AG04449 (cell line): ENCODE measurements at regions of chr17 and their contacts with region 1.

Region 1: DNA sequence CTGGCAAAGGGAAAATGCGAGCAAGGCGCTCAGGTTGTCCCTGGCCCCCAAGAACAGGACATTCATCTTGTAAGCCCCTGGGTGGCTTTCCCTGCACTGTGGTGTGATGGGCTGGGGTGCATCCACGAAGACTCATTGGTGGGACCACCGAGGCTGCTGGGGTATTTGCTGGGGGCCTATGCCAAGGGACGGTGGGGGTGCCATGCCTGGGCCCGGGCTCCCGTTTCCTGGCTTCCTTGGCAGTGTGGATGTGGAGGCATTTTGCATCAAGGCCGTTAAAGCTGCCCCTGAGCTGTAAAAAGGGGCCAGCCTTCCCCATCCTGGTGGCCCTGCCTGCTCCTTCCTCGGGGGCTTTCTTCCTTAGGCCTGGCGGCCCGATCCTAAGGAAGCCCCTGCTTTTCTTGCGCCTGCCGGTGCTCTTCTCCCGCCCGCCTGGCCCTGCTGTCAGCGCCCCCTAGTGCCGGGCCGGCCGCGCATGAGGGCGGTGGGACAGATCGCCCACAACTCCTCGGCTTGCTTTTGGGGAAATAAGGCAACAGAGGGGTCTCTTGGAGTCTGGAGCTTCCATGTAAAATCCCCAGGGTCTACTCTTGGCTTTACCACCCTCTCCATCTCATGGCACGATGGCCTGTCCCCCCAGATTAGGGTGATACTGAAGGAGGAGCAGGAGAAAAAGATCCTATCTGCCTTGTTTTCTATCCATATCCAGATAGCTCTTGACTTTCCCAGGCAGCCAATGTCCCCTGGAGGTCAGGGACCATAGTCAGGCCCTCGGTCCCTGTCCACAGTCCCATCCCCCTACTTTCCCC is 9.8 kb upstream of the TBX2 start:
- DNase-seq: no peak
- H3K4me3 ChIP-seq: no peak overlapping the region
- CTCF ChIP-seq: peak; percentile 97

Region 2: DNA sequence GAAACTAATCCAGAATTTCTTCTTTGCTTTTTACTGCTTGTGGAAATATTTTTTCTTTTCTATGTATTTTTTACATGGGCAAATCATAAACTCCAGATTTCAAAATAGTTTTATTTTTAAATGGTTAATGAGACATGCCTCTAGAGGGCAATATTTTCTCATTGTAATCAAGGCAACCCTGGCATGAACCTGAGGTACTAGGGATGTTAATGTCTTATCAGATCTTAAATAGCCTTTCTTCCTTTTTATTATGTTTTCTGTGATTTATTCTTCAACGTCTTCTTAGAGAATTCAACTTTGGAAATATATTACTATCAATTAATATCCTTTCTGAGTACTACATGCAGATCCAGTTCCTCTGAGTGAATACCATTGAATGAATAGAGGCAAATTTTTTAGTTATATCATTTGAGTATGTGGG is 387.5 kb before region 1 on chr17:
- CTCF ChIA-PET with region 1: interaction called, 54 read pairs
- POLR2A ChIA-PET with region 1: no interaction called
- DNase-seq: no peak
- H3K4me3 ChIP-seq: no peak overlapping the region
- CTCF ChIP-seq: peak; percentile 7

Region 3: GRCh38 chr17:61362396-61362795 is 27.5 kb before region 1 on chr17:
- CTCF ChIA-PET with region 1: interaction called, 12 read pairs
- POLR2A ChIA-PET with region 1: no interaction called
- DNase-seq: no peak
- H3K4me3 ChIP-seq: no peak overlapping the region
- CTCF ChIP-seq: no peak

Region 4: GRCh38 chr17:62336540-62336939 is 946.7 kb after region 1 on chr17:
- CTCF ChIA-PET with region 1: no interaction called
- POLR2A ChIA-PET with region 1: no interaction called
- DNase-seq: no peak
- H3K4me3 ChIP-seq: no peak overlapping the region
- CTCF ChIP-seq: no peak